ENCODE measurements at regions of chr2 and their contacts with region 1.

Region 1: DNA sequence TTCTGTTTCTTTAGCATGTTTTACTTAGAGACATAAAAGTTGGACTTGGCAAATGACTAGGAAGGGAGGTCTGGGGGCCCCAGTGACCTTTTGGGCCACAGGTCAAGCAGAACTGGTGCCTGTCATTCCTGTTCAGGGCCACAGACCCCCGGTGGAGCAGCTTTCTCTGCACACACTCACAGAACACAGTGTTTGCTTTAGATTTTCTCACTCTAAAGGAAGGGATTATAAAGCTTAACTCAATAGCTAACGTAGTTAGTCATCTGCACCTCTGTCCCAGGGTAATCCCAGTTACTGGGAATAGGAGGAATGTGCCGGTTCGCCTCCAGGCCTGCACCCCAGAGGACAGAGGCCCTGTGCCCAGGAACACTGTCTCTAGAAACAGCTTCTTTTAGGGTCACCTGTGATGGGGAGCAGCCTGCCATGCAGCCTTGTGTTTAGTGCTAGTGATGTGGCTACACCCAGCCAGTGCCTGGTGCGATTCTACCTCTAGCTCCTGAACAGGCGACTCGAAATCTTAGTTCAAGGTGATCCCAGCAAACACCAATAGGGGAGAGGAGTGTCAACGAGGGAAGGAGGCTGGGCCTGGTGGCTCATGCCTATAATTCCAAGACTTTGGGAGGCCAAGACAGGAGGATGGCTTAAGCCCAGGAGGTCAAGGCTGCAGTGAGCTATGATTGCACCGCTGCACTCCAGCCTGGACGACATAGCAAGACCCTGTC is 11.5 kb downstream of the SPATA3 start:
- DNase-seq: no peak
- H3K4me3 ChIP-seq: no peak overlapping the region
- H3K27ac ChIP-seq: no peak overlapping the region
- H3K4me1 ChIP-seq: no peaks in the 10 kb centered on the region
- H3K27me3 ChIP-seq: no peaks in the 10 kb centered on the region; a peak in 1 of 7 replicates
- CTCF ChIP-seq: no peak
- EP300 ChIP-seq: no peak
- POLR2A ChIP-seq: no peak
- RAD21 ChIP-seq: no peak

Region 2: GRCh38 chr2:230968921-230969658 is 38.4 kb before region 1 on chr2:
- CTCF ChIA-PET with region 1: no interaction called
- POLR2A ChIA-PET with region 1: no interaction called
- DNase-seq: no peak
- H3K4me3 ChIP-seq: no peak overlapping the region
- H3K27ac ChIP-seq: no peak overlapping the region
- H3K4me1 ChIP-seq: no peaks in the 10 kb centered on the region
- H3K27me3 ChIP-seq: no peaks in the 10 kb centered on the region
- CTCF ChIP-seq: no peak
- EP300 ChIP-seq: no peak
- POLR2A ChIP-seq: no peak
- RAD21 ChIP-seq: no peak

Region 3: GRCh38 chr2:231032575-231033133 is 25.2 kb after region 1 on chr2:
- CTCF ChIA-PET with region 1: interaction called, 10 read pairs
- POLR2A ChIA-PET with region 1: no interaction called
- DNase-seq: no peak
- H3K4me3 ChIP-seq: no peak overlapping the region
- H3K27ac ChIP-seq: no peak overlapping the region
- H3K4me1 ChIP-seq: no peaks in the 10 kb centered on the region
- H3K27me3 ChIP-seq: peaks cover 14 to 15% (median 15%) of the 10 kb centered on the region in 4 experiments
- CTCF ChIP-seq: no peak
- EP300 ChIP-seq: no peak
- POLR2A ChIP-seq: no peak
- RAD21 ChIP-seq: no peak

Measured in H1 (cell line).